Activated CD4-positive, alpha-beta T cell treated with anti-CD3 and anti-CD28 coated beads for 36 hours (primary cell): ENCODE measurements at regions of chr19 and their contacts with region 1.

Region 1: GRCh38 chr19:14517840-14518505 is at the start of gene DNAJB1:
- DNase-seq: peak; percentile 81
- ATAC-seq: peak; percentile 56
- H3K4me3 Mint-ChIP-seq: peak within 1 kb of the TSS; percentile 94
- H3K27ac Mint-ChIP-seq: peak within 1 kb of the TSS; percentile 94
- H3K4me1 Mint-ChIP-seq: peaks cover 60% of the 10 kb centered on the region
- H3K27me3 Mint-ChIP-seq: no peaks in the 10 kb centered on the region
- total RNA-seq, gene DNAJB1: 69.3 to 72.6 TPM

Region 2: GRCh38 chr19:13839130-13839937 is 678.6 kb before region 1 on chr19:
- CTCF ChIA-PET with region 1: no interaction called
- POLR2A ChIA-PET with region 1: no interaction called
- intact Hi-C with region 1: loop called in 1 of 2 experiments (anchors 2 kb)
- DNase-seq: peak; percentile 96
- ATAC-seq: peak; percentile 68
- H3K4me3 Mint-ChIP-seq: peak overlapping the region; percentile 94
- H3K27ac Mint-ChIP-seq: peak overlapping the region; percentile 95
- H3K4me1 Mint-ChIP-seq: peaks cover 54% of the 10 kb centered on the region
- H3K27me3 Mint-ChIP-seq: no peaks in the 10 kb centered on the region

Region 3: GRCh38 chr19:14405758-14406644 is 112.0 kb before region 1 on chr19:
- CTCF ChIA-PET with region 1: no interaction called
- POLR2A ChIA-PET with region 1: no interaction called
- intact Hi-C with region 1: loop called in 1 of 2 experiments (anchors 1 kb)
- DNase-seq: peak; percentile 96
- ATAC-seq: peak; percentile 78
- H3K4me3 Mint-ChIP-seq: peak overlapping the region; percentile 12
- H3K27ac Mint-ChIP-seq: no peak overlapping the region
- H3K4me1 Mint-ChIP-seq: peaks cover 16% of the 10 kb centered on the region
- H3K27me3 Mint-ChIP-seq: no peaks in the 10 kb centered on the region

Region 4: DNA sequence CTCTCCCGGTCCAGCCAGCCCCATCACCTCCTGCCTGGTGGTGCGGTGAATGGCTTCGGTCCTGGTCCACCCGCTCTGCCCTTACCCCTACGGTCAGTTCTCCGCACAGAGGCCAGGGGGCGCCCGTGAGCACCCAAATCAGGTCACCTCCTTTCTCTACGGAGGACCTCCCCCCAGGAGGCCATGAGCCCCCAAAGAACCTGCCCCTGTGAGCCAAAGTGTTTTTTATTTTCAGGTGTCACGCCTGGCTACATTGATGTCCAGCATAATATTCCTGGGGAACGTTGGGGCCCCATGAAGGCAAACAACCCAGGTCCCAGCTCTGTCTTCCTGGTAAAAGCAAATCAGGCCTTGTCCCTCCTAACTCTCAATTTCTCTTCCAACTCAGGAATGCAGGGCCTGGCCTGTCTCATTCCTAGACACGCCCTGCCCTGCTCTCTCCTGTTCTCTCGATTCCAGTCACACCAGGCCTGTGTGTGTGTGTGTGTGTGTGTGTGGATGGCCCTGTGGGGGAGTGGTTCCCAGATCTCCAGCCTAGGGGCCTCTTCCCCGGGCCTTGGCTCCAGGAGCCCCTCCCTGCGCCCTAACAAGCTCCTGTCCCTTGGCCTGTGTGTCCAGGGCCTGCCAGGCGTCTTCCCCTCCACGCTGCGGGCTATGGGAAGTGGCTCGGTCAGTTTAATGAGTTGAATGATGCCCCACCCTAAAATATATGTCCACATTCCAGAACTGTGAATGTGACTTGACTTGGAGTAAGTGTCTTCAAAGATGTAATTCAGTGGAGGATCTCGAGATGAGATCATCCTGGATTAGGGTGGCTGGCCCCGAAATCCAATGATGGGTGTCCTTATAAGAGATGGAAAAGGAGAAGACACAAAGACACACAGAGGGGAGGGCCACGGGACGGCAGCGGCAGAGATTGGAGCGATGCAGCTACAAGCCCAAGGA is 12.2 kb before region 1 on chr19:
- CTCF ChIA-PET with region 1: interaction called, 11 read pairs
- POLR2A ChIA-PET with region 1: interaction called, 12 read pairs
- intact Hi-C with region 1: no loop called
- DNase-seq: peak; percentile 89
- ATAC-seq: peak; percentile 76
- H3K4me3 Mint-ChIP-seq: no peak overlapping the region
- H3K27ac Mint-ChIP-seq: peak overlapping the region; percentile 66
- H3K4me1 Mint-ChIP-seq: peaks cover 57% of the 10 kb centered on the region
- H3K27me3 Mint-ChIP-seq: no peaks in the 10 kb centered on the region

Region 5: DNA sequence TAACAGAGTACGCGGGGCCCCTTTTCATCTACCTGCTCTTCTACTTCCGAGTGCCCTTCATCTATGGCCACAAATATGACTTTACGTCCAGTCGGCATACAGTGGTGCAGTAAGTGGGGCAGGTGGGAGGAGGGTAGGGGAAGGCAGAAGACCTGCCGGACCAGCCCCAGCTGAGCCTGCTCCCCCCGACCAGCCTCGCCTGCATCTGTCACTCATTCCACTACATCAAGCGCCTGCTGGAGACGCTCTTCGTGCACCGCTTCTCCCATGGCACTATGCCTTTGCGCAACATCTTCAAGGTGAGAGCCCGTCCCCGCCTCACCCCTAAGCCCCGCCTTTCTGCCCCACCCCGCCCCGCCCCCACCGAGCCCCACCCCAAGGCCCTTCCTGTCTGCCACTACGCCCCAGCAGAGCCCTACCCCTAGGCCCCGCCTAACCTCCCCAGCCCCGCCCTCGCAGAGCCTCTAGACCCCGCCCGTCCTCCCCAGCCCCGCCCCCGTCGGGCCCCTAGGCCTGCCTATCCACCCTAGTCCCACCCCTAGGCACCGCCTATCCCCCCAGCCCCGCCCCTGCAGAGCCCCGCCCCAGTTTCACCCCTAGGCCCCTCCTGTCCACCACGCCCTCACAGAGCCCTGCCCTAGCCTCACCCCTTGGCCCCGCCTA is 46.1 kb after region 1 on chr19:
- CTCF ChIA-PET with region 1: no interaction called
- POLR2A ChIA-PET with region 1: no interaction called
- intact Hi-C with region 1: loop called in 1 of 2 experiments (anchors 1 kb)
- DNase-seq: peak; percentile 88
- ATAC-seq: peak; percentile 89
- H3K4me3 Mint-ChIP-seq: no peak overlapping the region
- H3K27ac Mint-ChIP-seq: no peak overlapping the region
- H3K4me1 Mint-ChIP-seq: peaks cover 24% of the 10 kb centered on the region
- H3K27me3 Mint-ChIP-seq: no peaks in the 10 kb centered on the region